ENCODE measurements at regions of chr14 and their contacts with region 1.

Region 1: DNA sequence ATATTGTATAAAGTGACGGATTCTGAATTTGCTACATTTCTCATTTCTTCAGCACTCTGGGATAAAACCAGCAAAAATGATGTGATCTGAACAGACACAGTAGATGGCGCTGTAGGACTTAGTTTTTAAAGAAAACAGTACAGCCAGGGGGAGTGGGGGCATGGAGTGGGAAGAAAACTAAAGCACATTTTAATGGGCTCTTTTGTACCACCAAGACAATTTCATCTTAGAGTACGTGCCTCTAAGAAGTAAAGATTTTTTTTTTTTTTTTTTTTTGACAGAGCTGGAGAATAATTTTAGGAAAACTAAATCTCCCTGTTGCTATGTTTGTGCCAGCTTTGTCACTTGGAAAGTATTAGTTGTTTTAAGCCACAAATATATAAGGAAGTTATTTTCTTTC is 124.4 kb downstream of the RAD51B start:
- DNase-seq: peak in 1 of 2 donors; percentile 67
- ATAC-seq: peak; percentile 85
- H3K4me3 ChIP-seq: no peak overlapping the region
- H3K27ac ChIP-seq: no peak overlapping the region
- H3K4me1 ChIP-seq: peaks cover 10% of the 10 kb centered on the region in 2 donors
- H3K27me3 ChIP-seq: no peaks in the 10 kb centered on the region

Region 2: GRCh38 chr14:68232300-68233055 is 288.5 kb after region 1 on chr14:
- intact Hi-C with region 1: loop called in 1 of 2 experiments (anchors 5 kb)
- DNase-seq: peak in 1 of 2 donors; percentile 68
- ATAC-seq: peak; percentile 94
- H3K4me3 ChIP-seq: no peak overlapping the region
- H3K27ac ChIP-seq: peak overlapping the region; percentile 19 to 81
- H3K4me1 ChIP-seq: peaks cover 0 to 3% of the 10 kb centered on the region in 2 donors
- H3K27me3 ChIP-seq: no peaks in the 10 kb centered on the region

Region 3: DNA sequence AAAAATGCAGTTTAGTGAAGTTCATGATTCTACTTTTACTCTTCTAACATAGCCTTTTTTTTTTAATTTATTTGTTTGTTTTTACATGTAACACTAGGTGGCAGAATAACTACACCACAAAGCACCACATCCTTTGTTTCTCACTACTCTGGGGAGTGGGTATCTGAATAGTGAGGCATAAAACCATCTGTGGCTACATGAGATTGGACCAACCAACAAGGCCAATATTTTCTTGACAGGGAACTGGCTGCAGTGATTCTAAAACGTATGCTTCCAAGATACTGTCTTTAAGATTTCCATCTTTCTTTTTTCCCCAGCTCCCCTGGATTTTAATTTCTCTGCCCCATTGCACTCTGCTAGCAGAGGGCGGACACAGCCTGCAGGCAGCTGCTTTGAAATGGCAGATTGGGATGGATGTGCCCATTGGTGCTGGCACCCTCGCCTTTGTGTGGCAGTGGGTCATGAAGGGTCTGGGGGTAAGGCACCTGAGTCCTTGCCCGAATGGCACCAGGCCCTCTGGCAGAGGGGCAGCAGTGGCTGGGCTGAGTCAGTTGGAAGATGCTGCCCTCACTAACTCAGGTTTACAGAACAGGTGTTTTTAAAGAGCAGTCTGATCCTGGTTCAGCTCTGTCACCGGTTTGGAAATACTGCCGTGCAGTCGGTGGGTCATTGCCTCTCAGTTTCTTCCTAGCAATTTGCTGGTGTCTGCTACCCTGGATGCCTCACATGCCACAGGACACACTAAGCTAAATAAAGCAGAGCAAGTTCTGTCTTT is 304.7 kb after region 1 on chr14:
- intact Hi-C with region 1: loop called (anchors 5 kb)
- DNase-seq: peak; percentile 57 to 73
- ATAC-seq: peak; percentile 82
- H3K4me3 ChIP-seq: no peak overlapping the region
- H3K27ac ChIP-seq: peak overlapping the region in 1 of 2 donors; percentile 82
- H3K4me1 ChIP-seq: peaks cover 19 to 21% of the 10 kb centered on the region in 2 donors
- H3K27me3 ChIP-seq: no peaks in the 10 kb centered on the region

Region 4: GRCh38 chr14:68520637-68521556 is 577.0 kb after region 1 on chr14:
- intact Hi-C with region 1: loop called in 1 of 2 experiments (anchors 10 kb)
- DNase-seq: no peak
- ATAC-seq: no peak
- H3K4me3 ChIP-seq: no peak overlapping the region
- H3K27ac ChIP-seq: peak overlapping the region in 1 of 2 donors; percentile 50
- H3K4me1 ChIP-seq: peaks cover 4% of the 10 kb centered on the region in 2 donors
- H3K27me3 ChIP-seq: no peaks in the 10 kb centered on the region

Region 5: GRCh38 chr14:68685419-68686204 is 741.7 kb after region 1 on chr14:
- intact Hi-C with region 1: loop called in 1 of 2 experiments (anchors 10 kb)
- DNase-seq: no peak
- ATAC-seq: no peak
- H3K4me3 ChIP-seq: no peak overlapping the region
- H3K27ac ChIP-seq: no peak overlapping the region
- H3K4me1 ChIP-seq: peaks cover 2 to 11% of the 10 kb centered on the region in 2 donors
- H3K27me3 ChIP-seq: no peaks in the 10 kb centered on the region

Region 6: DNA sequence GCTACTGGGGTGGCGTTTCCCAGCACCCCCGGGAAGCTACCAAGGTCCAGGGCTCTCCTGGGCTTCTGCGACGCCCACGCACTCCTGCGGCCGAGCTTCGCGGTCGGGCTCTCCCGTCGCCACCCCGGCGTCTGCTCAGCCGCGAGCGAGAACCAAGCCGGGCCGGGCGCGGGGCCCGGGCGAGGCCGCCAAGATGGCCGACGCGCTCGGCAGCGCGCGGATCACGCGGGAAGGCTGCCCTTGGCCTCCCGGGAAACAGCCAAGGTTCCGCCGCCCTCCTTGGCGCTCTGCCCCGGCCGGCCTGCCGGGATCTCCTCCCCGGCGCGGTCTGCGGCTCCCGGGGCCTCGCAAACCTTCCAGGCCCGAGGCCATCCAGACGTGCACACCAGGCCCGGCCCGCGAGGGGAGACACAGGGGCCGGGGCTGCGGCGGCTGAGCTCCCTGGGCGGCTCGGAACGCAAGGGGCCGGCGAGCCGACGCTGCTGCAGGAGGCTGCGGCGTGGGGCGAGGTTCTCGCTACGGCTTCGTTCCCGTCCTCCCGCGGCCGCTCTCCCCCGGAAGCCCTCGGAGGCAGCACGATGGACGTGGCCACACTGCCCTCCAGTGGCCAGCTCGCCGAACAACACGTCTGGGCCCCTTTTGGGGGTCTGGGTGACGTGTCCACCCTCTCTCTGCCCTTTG is 872.5 kb after region 1 on chr14:
- intact Hi-C with region 1: loop called (anchors 2 to 5 kb)
- DNase-seq: peak; percentile 94 to 97
- ATAC-seq: peak; percentile 94
- H3K4me3 ChIP-seq: no peak overlapping the region
- H3K27ac ChIP-seq: peak overlapping the region; percentile 65 to 70
- H3K4me1 ChIP-seq: peaks cover 0 to 3% of the 10 kb centered on the region in 2 donors
- H3K27me3 ChIP-seq: no peaks in the 10 kb centered on the region

Region 7: DNA sequence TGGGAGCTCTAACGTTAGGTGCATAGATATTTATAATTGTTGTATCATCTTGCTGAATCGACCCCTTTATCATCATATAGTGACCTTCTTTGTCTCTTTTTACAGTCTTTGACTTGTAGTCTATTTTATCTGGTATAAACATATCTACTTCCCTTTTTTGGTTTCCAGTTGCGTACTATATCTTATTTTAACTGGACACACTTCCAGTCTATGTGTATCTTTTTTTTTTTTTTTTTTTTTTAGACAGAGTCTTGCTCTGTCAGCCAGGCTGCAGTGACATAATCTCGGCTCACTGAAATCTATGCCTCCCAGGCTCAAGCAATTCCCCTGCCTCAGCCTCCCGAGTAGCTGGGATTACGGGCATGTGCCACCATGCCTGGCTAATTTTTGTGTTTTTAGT is 890.9 kb after region 1 on chr14:
- intact Hi-C with region 1: no loop called
- DNase-seq: no peak
- ATAC-seq: no peak
- H3K4me3 ChIP-seq: no peak overlapping the region
- H3K27ac ChIP-seq: no peak overlapping the region
- H3K4me1 ChIP-seq: no peaks in the 10 kb centered on the region
- H3K27me3 ChIP-seq: no peaks in the 10 kb centered on the region